ENCODE measurements at regions of chr5 and their contacts with region 1.

Region 1: GRCh38 chr5:1167728-1168709 is 33.4 kb upstream of the SLC6A19 start:
- DNase-seq: peak; percentile 31 to 83 (median 71)
- ATAC-seq: peak; percentile 86
- H3K4me3 ChIP-seq: peak overlapping the region; percentile 19 to 31
- H3K4me3 Mint-ChIP-seq: peak overlapping the region; percentile 80
- H3K27ac ChIP-seq: no peak overlapping the region
- H3K27ac Mint-ChIP-seq: no peak overlapping the region
- H3K4me1 ChIP-seq: peaks cover 7% of the 10 kb centered on the region
- H3K4me1 Mint-ChIP-seq: peaks cover 16% of the 10 kb centered on the region
- H3K27me3 ChIP-seq: peaks cover 0 to 3% of the 10 kb centered on the region in 2 experiments
- H3K27me3 Mint-ChIP-seq: peaks cover 6% of the 10 kb centered on the region
- CTCF ChIP-seq: peak; percentile 87

Region 2: DNA sequence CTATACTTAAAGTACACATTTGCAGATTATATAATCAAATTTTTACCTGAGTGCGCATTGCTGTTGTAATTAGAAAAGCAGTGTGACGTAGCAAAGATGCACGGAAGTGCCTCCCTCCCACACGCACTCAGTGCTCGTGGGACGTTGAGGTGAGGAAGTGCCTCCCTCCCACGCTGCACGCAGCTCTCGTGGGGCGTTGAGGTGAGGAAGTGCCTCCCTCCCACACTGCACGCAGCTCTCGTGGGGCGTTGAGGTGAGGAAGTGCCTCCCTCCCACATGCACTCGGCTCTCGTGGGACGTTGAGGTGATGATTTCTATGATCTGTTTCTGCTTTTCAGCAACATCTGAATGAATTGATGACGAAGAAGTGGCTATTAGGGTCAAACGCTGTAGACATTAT is 704.1 kb before region 1 on chr5:
- CTCF ChIA-PET with region 1: no interaction called
- POLR2A ChIA-PET with region 1: no interaction called
- intact Hi-C with region 1: no loop called
- DNase-seq: peak; percentile 48 to 94 (median 70)
- ATAC-seq: peak; percentile 99
- H3K4me3 ChIP-seq: no peak overlapping the region
- H3K4me3 Mint-ChIP-seq: peak overlapping the region; percentile 12
- H3K27ac ChIP-seq: peak overlapping the region; percentile 52 to 57
- H3K27ac Mint-ChIP-seq: peak overlapping the region; percentile 82
- H3K4me1 ChIP-seq: peaks cover 18% of the 10 kb centered on the region
- H3K4me1 Mint-ChIP-seq: peaks cover 11% of the 10 kb centered on the region
- H3K27me3 ChIP-seq: no peaks in the 10 kb centered on the region
- H3K27me3 Mint-ChIP-seq: no peaks in the 10 kb centered on the region
- CTCF ChIP-seq: no peak

Region 3: DNA sequence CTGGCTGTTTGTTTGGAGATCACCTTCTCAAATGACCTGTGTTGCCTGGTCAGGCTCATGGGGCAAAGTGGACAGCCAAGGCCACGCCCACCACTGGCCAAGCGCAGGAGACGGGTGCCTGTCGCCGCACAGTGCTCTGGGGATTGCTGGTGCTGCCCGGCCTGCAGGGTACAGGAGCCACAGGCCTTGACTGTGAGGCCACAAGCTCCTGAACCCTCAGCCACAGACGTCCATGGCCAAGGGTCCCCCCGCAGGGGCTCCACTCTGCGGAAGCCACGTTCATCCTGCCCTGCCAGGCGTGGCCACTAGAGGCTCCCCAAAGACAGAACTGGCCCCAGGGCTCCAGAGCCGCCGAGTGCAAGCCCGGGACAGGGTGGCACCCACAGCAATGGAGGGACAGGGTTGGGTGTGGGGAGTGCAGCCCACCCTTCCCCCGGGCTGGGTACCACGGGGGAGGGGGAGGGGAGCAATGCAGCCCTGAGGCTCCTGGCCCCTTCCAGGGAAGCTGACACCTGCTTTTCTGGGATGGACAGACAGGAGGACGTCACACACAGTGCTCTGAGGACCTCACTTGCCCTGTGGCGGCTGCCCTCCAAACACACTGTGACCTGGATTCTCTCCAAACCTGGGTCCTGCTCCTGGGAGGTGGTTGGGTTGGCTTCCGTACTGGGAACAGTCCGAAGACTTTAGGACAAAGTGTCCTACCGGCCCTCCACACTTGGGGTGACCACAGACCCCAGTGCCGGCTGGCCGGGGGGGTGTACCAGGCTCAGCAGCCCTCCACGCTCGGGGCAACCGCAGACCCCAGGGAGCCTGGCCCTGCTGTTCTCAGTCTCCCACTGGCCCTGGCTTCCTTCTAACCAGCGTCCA is 496.3 kb before region 1 on chr5:
- CTCF ChIA-PET with region 1: interaction called, 3 read pairs
- POLR2A ChIA-PET with region 1: no interaction called
- intact Hi-C with region 1: loop called in 1 of 2 experiments (anchors 5 kb)
- DNase-seq: peak; percentile 47 to 79 (median 71)
- ATAC-seq: peak; percentile 78
- H3K4me3 ChIP-seq: no peak overlapping the region
- H3K4me3 Mint-ChIP-seq: no peak overlapping the region
- H3K27ac ChIP-seq: no peak overlapping the region
- H3K27ac Mint-ChIP-seq: no peak overlapping the region
- H3K4me1 ChIP-seq: peaks cover 22% of the 10 kb centered on the region
- H3K4me1 Mint-ChIP-seq: peaks cover 16% of the 10 kb centered on the region
- H3K27me3 ChIP-seq: peaks cover 0 to 4% of the 10 kb centered on the region in 2 experiments
- H3K27me3 Mint-ChIP-seq: peaks cover 8% of the 10 kb centered on the region
- CTCF ChIP-seq: peak; percentile 69

Region 4: GRCh38 chr5:923281-923873 is 244.6 kb before region 1 on chr5:
- CTCF ChIA-PET with region 1: interaction called, 20 read pairs
- POLR2A ChIA-PET with region 1: no interaction called
- intact Hi-C with region 1: loop called in 1 of 2 experiments (anchors 1 kb)
- DNase-seq: peak; percentile 50 to 84 (median 68)
- ATAC-seq: peak; percentile 86
- H3K4me3 ChIP-seq: no peak overlapping the region
- H3K4me3 Mint-ChIP-seq: no peak overlapping the region
- H3K27ac ChIP-seq: no peak overlapping the region
- H3K27ac Mint-ChIP-seq: no peak overlapping the region
- H3K4me1 ChIP-seq: no peaks in the 10 kb centered on the region
- H3K4me1 Mint-ChIP-seq: peaks cover 10% of the 10 kb centered on the region
- H3K27me3 ChIP-seq: peaks cover 8 to 10% of the 10 kb centered on the region in 2 experiments
- H3K27me3 Mint-ChIP-seq: peaks cover 23% of the 10 kb centered on the region
- CTCF ChIP-seq: peak; percentile 69

Region 5: GRCh38 chr5:1152156-1152555 is 15.9 kb before region 1 on chr5:
- CTCF ChIA-PET with region 1: interaction called, 10 read pairs
- POLR2A ChIA-PET with region 1: no interaction called
- intact Hi-C with region 1: no loop called
- DNase-seq: peak in 7 of 9 experiments; percentile 19 to 73 (median 59)
- ATAC-seq: peak; percentile 69
- H3K4me3 ChIP-seq: peak overlapping the region in 1 of 2 experiments; percentile 35
- H3K4me3 Mint-ChIP-seq: peak overlapping the region; percentile 45
- H3K27ac ChIP-seq: no peak overlapping the region
- H3K27ac Mint-ChIP-seq: peak overlapping the region; percentile 74
- H3K4me1 ChIP-seq: peaks cover 45% of the 10 kb centered on the region
- H3K4me1 Mint-ChIP-seq: peaks cover 35% of the 10 kb centered on the region
- H3K27me3 ChIP-seq: peaks cover 0 to 16% of the 10 kb centered on the region in 2 experiments
- H3K27me3 Mint-ChIP-seq: peaks cover 21% of the 10 kb centered on the region
- CTCF ChIP-seq: no peak

Region 6: DNA sequence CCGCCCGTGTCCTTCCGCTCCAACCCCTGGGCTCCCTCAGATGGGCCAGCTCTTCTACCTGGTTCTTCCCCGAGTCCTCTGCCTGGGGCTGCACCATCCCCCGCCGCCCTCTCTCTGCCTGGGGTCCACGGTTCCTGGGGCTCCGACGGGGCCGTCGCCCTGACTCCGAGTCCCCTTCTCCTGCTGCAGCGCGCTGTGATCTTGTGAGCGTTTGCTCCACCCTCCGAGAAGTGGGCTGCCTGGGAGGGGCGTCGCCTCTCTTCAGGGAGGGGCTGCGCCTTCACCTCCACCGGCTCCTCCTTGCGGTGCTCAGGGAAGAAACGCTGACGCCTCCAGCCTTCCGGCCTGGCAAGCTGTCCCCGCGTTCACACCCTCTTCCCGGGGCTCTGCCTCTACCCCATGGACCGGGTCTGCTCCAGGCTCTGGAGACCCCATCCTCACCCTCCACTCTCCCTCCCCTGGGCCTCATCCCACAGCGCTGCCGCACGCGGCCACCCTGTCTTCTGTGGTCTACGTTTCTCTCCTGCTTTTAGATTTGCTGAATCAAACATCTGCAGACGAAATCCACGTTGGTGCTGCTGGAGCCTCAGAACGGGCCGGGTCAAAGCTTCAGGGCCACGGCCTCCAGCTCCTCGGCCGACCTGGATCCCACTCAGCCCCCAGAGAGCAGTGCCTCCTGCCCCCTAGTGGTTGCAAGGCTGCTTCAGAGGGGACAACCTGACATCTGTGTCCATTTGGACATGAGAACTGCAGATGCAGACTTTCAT is 299.9 kb after region 1 on chr5:
- CTCF ChIA-PET with region 1: interaction called, 16 read pairs
- POLR2A ChIA-PET with region 1: no interaction called
- intact Hi-C with region 1: loop called (anchors 1 kb)
- DNase-seq: peak in 4 of 9 experiments; percentile 31 to 56 (median 50)
- ATAC-seq: no peak
- H3K4me3 ChIP-seq: no peak overlapping the region
- H3K4me3 Mint-ChIP-seq: no peak overlapping the region
- H3K27ac ChIP-seq: no peak overlapping the region
- H3K27ac Mint-ChIP-seq: no peak overlapping the region
- H3K4me1 ChIP-seq: no peaks in the 10 kb centered on the region
- H3K4me1 Mint-ChIP-seq: no peaks in the 10 kb centered on the region
- H3K27me3 ChIP-seq: no peaks in the 10 kb centered on the region
- H3K27me3 Mint-ChIP-seq: no peaks in the 10 kb centered on the region
- CTCF ChIP-seq: peak; percentile 19

Region 7: GRCh38 chr5:1652596-1653345 is 484.8 kb after region 1 on chr5:
- CTCF ChIA-PET with region 1: interaction called, 18 read pairs
- POLR2A ChIA-PET with region 1: no interaction called
- intact Hi-C with region 1: no loop called
- DNase-seq: no peak
- ATAC-seq: no peak
- H3K4me3 ChIP-seq: no peak overlapping the region
- H3K4me3 Mint-ChIP-seq: no peak overlapping the region
- H3K27ac ChIP-seq: no peak overlapping the region
- H3K27ac Mint-ChIP-seq: no peak overlapping the region
- H3K4me1 ChIP-seq: peaks cover 9% of the 10 kb centered on the region
- H3K4me1 Mint-ChIP-seq: peaks cover 5% of the 10 kb centered on the region
- H3K27me3 ChIP-seq: peaks cover 4 to 22% of the 10 kb centered on the region in 2 experiments
- H3K27me3 Mint-ChIP-seq: peaks cover 47% of the 10 kb centered on the region
- CTCF ChIP-seq: no peak